Vagina (tissue), 2 donors: ENCODE measurements at regions of chr10 and their contacts with region 1.

Region 1: DNA sequence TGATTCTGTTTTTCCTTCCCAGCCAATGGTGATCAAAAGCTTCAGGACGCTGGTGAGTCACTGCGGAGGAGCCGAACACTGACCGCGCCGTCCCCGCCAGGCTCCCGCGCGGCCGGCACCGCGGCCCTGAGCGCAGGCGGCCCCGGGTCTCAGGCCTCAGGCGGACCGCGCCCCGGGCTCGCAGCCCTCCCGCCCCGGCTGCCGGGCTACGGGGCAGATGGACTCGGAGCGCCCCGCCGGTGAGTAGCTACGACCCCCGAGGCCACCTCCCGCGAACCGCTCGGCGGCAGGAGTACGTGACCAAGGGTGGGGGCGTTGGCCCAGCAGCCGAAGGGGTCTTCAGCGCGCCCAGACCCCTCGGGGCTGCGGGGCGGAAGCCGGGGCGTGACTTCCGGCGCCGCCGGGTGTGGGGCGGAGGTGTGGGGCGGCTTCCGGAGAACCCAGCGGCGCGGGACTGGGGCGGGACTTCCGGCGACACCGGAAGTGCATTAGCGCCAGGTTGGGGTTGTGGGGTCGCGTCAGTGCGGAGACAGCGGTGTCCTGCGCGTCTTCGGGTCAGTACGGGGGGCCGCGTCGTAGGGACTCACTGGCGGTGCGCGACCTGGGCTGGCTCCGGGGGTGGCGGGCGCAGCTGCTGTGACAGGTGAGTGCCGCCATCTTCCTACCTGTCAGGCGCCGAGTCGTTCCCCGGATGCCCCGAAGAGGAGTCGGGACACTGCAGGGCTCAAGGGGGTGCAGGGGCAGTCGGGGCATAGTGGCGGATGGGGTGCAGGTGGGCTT is at the start of gene WDR37:
- DNase-seq: no peak
- H3K4me3 ChIP-seq: peak within 1 kb of the TSS; percentile 68 to 98
- H3K27ac ChIP-seq: peak within 1 kb of the TSS; percentile 98
- H3K4me1 ChIP-seq: peaks cover 59% of the 10 kb centered on the region
- H3K27me3 ChIP-seq: no peaks in the 10 kb centered on the region
- CTCF ChIP-seq: no peak
- POLR2A ChIP-seq: peak in 1 of 2 donors; percentile 32
- total RNA-seq, gene WDR37: 16.9 TPM

Region 2: GRCh38 chr10:931416-932318 is 124.8 kb before region 1 on chr10 and contains the start of gene LARP4B:
- intact Hi-C with region 1: loop called (anchors 10 kb)
- DNase-seq: peak in 1 of 2 donors; percentile 96
- H3K4me3 ChIP-seq: peak within 1 kb of the TSS; percentile 89 to 91
- H3K27ac ChIP-seq: peak within 1 kb of the TSS; percentile 99
- H3K4me1 ChIP-seq: peaks cover 52% of the 10 kb centered on the region
- H3K27me3 ChIP-seq: no peaks in the 10 kb centered on the region
- CTCF ChIP-seq: no peak
- POLR2A ChIP-seq: peak in 1 of 2 donors; percentile 68
- total RNA-seq, gene LARP4B: 78.3 TPM